ENCODE measurements at regions of chr2 and their contacts with region 1.

Region 1: DNA sequence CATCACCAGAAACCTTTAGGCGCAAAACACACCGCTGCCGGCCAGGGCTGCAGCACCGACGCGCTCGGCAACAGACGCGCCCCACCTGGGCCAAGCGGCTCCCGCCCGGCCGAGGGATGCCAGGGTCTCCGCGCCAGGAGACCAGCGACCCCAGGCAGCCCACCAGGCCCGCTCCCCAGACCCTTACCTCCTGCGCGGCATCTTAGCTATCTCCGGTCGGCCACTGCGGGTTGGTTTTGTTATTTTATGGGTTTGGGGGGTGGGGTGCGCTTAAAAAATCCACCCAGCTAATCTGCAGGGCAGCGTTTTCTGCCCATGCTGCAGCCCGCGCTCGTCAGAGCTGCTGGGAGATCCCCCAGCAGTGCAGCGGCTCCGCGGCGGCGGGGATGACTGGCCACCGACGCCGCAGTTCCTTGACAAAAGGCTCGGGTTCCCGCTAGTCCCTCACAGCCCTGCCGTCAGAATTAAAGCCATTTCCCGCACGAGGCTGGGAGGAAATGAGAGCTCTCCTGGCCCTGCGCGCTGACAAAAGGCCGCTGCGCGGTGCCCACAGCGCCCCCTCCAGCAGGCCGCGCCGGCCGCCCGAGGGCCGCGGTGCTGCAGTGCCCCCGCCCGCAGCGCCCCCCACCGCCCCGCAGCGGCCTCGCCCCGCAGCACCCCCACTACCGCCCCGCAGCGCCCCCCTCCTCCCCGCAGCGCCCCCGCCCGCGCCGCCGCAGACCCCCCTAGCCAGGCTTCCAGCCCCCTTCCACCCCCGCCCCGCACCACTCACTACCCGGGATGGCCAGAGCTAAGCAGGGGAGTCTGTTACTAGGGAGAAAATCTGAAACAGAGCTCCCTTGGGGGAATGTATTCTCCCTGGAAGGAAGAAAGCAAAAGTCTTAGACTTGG is at the start of gene ADD2:
- DNase-seq: peak; percentile 53
- ATAC-seq: peak; percentile 69
- H3K4me3 Mint-ChIP-seq: peak within 1 kb of the TSS; percentile 90
- H3K27ac Mint-ChIP-seq: peak within 1 kb of the TSS; percentile 85
- H3K4me1 Mint-ChIP-seq: peaks cover 24% of the 10 kb centered on the region
- H3K27me3 Mint-ChIP-seq: peaks cover 16% of the 10 kb centered on the region
- CTCF ChIP-seq: no peak
- total RNA-seq, gene ADD2: 12.5 and 15.4 TPM in 2 replicates

Region 2: DNA sequence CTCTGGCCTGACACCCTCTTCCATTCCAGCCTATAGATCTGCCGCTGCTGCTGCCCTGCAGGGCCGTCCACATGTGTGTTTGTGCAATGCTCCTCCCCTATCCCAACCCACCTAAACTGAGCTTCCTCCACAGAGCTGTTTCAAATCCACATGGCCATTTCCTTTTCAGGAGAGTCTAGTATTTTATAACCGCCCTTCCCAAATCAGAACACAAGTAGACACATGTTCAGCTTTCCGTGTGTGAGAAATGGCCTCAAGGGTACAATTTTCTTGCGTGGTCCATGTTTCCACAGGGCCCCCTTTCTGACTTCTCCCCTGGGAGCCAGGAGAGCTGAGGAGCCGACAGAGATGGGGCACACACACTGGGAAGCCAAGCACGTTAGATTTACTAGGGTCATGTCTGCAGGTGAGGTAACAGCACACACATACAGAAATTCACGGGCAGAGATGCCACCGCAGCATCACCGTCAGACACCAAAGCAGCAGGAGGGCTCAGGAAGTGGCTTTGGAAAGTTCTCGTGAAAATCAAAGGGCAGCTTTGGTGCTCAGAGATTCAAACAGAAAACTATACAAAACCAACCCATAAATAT is 111.4 kb before region 1 on chr2:
- CTCF ChIA-PET with region 1: interaction called, 3 read pairs
- POLR2A ChIA-PET with region 1: no interaction called
- intact Hi-C with region 1: loop called (anchors 5 kb)
- DNase-seq: no peak
- ATAC-seq: no peak
- H3K4me3 Mint-ChIP-seq: no peak overlapping the region
- H3K27ac Mint-ChIP-seq: no peak overlapping the region
- H3K4me1 Mint-ChIP-seq: no peaks in the 10 kb centered on the region
- H3K27me3 Mint-ChIP-seq: peaks cover 23% of the 10 kb centered on the region
- CTCF ChIP-seq: no peak

Region 3: DNA sequence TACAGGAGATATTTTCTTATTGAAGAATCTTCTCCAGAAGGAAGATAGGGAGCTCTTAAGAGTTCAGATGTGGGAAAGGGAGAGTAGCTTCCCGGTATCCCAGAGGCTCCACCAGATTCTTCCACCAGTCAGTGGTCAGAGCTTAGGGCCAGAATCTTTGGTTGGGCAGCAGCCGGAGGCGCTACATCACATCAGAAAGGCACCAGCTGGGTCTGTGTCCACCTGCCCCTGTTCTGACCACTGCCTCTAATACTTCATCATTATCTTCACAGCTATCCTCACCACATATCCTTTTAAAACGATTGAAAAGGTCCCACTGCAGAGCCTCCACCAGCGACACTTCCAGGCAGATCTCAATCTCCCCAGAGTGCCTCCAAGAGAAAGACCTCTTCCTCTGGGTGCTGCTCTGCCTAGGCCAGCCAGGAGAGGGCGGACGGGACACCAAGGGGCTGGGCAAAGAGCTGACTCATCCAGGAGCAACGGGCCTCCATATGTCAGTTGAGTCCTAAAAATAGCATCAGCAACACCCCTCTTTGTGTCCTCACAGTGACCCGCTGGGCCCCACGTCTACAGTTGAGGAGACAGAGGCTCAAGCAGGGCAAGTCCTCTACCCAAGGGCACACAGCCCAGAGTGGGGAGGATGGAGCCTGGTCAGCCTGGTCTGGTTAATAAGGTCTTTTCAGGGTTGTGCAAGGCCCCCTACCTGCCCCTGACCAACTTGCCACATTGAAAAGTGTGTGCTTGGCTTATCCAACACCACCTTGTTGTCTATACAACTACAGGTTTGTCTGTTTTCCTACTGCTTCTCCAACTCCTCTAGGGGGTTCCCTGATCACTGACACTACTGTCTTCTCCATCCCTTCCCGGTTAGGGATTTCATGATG is 81.1 kb before region 1 on chr2:
- CTCF ChIA-PET with region 1: interaction called, 7 read pairs
- POLR2A ChIA-PET with region 1: no interaction called
- intact Hi-C with region 1: loop called (anchors 5 kb)
- DNase-seq: no peak
- ATAC-seq: no peak
- H3K4me3 Mint-ChIP-seq: no peak overlapping the region
- H3K27ac Mint-ChIP-seq: no peak overlapping the region
- H3K4me1 Mint-ChIP-seq: no peaks in the 10 kb centered on the region
- H3K27me3 Mint-ChIP-seq: no peaks in the 10 kb centered on the region
- CTCF ChIP-seq: no peak

Region 4: DNA sequence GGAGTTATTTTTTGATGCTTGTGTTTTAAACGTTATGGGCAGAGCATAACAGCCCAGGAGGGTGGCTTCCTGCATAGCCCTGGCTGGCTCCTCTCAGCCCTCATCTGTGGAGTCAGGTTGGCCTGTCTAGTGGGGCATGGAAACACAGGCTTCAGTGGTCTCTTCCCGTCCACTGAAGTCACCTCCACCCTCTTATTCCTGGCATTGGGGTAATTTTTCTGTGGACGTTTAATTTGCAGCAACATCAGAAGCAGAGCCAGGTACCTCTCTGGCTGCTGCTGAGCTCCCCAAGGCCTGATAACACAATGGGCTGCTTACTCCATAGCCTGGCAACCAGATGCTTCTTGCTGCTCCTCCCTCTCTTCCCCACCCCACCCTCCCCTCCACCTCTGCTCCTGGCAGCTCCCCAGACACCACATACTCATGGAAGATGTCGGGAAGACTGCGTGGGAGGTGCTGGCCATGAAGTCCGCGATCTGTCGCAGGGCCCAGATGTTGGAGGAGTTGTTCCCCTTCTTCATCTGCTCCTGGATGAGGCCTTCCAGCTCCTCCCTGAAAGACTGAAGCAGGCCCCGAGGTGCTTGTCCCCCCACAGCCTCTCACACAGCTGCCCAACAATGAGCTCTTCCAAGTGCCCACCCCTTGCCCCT is 63.9 kb before region 1 on chr2:
- CTCF ChIA-PET with region 1: interaction called, 3 read pairs
- POLR2A ChIA-PET with region 1: no interaction called
- intact Hi-C with region 1: loop called (anchors 5 kb)
- DNase-seq: no peak
- ATAC-seq: no peak
- H3K4me3 Mint-ChIP-seq: no peak overlapping the region
- H3K27ac Mint-ChIP-seq: no peak overlapping the region
- H3K4me1 Mint-ChIP-seq: no peaks in the 10 kb centered on the region
- H3K27me3 Mint-ChIP-seq: no peaks in the 10 kb centered on the region
- CTCF ChIP-seq: no peak

Region 5: DNA sequence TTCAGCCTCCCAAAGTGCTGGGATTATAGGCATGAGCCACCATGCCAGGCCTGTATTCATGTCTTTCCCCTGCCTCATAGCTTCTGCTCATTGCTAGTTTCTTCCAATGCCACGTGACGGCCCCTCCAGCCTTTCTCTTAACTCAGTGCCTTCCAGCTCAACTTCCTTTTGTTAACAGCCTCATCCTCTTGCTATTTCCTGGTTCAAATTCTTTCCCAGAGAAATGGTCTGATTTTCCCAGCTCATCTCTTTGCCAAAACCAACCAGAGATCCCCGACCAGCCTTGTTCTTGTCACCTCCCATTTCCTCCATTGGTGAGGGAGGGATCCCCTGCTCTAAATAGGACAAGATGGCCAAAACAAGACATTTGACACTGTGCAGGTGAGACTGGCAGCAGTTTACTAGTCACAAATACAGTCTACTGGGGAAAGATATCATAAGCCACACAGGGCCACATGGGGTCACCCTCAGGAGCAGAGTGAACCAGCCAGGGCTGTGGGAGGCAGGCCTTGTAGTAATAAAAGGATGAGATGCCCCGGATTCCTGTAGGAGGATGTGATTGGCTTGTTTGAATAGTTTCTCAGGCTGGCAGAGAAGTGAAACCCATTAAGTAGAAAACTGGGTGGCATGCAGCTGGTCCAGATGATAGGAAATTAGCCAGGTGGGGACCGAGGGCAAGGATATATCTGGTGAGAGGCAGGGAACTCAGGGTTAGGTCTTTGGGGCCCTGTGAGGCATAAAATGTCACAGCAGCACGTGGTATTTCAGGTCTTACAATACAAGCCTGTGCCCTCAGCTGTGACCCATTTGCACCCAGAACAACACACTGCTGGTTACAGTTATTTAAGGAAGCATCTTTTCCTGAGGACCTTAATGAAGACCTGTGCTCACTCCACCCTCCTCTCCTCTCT is 61.2 kb after region 1 on chr2:
- CTCF ChIA-PET with region 1: no interaction called
- POLR2A ChIA-PET with region 1: no interaction called
- intact Hi-C with region 1: no loop called
- DNase-seq: no peak
- ATAC-seq: no peak
- H3K4me3 Mint-ChIP-seq: no peak overlapping the region
- H3K27ac Mint-ChIP-seq: no peak overlapping the region
- H3K4me1 Mint-ChIP-seq: no peaks in the 10 kb centered on the region
- H3K27me3 Mint-ChIP-seq: peaks cover 16% of the 10 kb centered on the region
- CTCF ChIP-seq: no peak